BJ (cell line): ENCODE measurements at regions of chr5 and their contacts with region 1.

Region 1: DNA sequence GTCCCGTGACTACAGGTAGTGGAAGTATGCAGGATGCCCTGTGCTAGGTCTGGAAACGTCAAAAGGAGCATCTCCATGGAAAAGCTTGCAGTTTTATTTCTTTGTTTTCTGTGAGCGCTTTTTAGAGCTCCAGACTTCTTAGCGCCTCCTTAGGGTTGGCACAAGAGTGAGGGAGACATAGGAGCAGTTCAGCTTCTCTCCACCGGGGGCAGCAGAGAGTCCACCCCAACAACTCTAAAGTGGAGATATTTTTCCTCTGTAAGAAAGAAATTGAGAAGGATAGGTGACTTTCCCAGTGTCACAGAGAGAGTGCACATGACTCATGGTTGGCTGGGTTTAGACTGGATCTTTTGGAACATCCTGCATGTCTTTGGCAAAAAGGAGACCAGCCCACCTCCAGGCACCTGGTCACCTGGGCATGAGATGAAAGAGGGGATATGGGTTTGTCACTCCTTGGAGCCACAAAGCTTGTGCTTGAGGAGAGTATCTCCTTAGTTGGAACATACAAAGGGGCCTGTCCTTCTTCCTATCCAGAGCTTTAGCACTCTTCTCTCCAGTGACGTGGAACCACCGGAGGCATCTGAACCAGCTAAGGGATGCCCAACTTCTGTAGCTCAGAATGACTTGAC is 637.7 kb downstream of the SEMA5A start:
- DNase-seq: no peak
- H3K4me3 ChIP-seq: no peak overlapping the region
- H3K27me3 ChIP-seq: no peaks in the 10 kb centered on the region
- CTCF ChIP-seq: peak; percentile 82

Region 2: GRCh38 chr5:8923526-8923925 is 15.4 kb after region 1 on chr5:
- CTCF ChIA-PET with region 1: interaction called, 12 read pairs
- POLR2A ChIA-PET with region 1: no interaction called
- DNase-seq: no peak
- H3K4me3 ChIP-seq: no peak overlapping the region
- H3K27me3 ChIP-seq: no peaks in the 10 kb centered on the region
- CTCF ChIP-seq: no peak

Region 3: GRCh38 chr5:9069650-9070049 is 161.5 kb after region 1 on chr5:
- CTCF ChIA-PET with region 1: no interaction called
- POLR2A ChIA-PET with region 1: no interaction called
- DNase-seq: peak; percentile 87
- H3K4me3 ChIP-seq: no peak overlapping the region
- H3K27me3 ChIP-seq: no peaks in the 10 kb centered on the region
- CTCF ChIP-seq: no peak

Region 4: DNA sequence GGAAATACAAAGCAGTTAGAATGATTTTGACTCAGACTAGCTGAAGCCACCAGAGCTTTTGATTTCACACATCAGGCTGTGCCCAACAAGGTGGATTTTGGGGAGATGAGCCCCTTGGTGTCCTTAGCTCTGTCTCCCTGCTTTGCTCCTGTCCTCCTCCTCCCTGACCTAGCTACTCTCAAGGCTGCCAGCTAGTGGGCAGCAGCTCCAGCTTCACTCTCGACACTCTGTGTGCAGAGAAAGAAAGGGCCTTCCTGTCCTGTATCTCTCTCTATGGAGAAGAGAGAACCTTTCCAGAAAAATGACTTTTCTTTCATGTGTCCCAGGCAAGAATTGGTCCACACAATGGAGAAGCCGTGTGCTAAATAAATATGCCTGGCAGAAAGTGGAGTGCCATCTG is 191.5 kb after region 1 on chr5:
- CTCF ChIA-PET with region 1: no interaction called
- POLR2A ChIA-PET with region 1: no interaction called
- DNase-seq: no peak
- H3K4me3 ChIP-seq: no peak overlapping the region
- H3K27me3 ChIP-seq: no peaks in the 10 kb centered on the region
- CTCF ChIP-seq: no peak